Head of caudate nucleus (tissue), 42 donors: ENCODE measurements at regions of chr2 and their contacts with region 1.

Region 1: DNA sequence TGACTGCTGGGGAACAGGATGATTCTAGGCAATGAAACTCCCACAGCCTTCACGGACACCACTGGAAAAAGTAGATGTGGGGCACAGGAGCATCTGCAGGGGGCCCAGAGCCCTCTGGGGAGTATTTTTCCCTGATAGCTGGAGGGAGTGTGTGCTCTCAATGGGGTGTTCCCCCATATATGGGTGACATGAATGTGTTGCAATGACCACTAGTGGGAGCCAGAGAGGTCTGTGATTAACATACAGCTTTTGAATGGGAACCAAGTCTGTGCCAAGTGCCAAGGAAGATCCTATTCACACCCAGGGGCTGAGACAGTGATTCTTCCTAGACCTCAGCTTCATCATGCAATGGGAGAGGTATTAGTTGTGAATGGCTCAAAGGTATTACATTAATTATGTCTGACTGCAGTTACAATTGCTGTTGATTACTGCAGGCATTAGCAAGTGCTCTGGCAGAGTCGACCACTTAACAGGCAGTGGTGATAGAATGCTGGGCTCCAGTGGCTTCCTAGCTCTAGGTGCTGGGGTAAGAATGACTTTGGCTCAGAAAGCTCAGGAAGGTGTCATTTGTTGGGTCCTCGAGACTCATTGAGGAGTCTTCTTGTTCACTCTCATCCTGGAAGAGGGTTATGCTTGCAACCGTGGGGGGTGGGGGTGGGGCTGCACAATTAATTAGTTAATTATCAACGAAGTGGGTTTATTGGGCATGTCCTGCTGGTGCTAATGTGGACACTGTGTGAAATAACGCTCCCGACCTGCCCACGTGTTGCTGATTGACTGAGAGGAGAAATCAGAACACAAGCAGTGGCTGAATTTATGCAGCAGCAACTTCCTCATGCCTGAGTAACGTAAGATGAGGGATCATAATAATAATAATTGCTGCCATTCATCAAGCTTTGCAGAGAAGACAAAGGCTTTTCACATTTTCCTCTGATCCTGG is 194.1 kb downstream of the CLIP4 start:
- DNase-seq: peak in 35 of 42 donors; percentile 20 to 89 (median 60)

Region 2: DNA sequence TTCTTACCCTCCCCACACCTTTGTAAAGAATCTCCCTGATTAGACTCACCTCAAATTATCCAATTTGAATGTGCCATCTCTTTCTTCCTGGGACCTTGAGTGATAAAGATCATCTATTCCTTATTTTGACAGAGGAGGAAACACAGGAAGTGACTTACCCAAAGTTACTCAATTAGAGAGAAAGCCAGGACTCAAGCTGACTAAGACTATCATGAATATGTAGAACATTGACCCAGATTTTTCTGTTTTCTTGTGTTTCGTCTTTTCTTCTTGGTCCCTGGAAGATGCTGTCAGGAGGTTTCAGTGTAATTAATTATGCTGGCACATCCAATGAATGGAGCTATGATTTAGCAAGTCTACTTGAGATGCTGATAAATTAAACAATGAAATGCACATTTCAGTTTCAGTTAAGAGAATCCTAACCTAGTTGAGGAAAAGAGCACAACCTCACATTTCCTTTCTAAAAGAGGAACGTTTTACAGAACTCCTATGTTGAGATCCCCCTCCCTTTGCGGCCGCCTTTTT is 186.2 kb after region 1 on chr2:
- intact Hi-C with region 1: no loop called
- DNase-seq: no peak

Region 3: DNA sequence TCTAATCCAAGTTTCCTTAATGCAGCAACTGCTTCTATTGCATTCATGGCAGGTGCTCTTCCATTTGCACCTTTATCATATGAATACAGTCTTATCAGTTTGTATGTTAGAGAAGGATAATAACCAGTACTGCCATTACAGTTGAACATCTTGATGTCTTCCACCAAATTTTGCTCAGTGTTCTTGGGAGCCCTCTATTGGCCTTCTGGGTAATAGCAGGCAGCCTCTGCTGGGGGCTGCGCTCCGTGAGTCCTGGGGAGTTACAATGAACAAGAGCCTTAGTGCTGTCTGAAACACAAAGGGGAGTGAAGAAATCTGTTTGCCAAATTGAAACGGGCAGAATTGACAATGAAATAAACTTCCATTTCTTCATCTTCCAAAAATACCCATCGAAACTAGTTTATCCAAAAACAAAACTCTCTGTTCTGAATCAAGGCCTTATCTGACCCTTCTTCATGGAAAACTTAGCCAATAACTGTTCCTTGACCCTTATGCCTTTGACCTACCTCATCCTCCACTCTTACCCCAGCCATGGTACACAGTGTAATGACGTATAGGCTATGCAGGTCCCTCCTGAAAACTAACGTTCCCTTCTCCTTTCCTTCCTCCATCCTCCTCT is 532.1 kb after region 1 on chr2:
- intact Hi-C with region 1: loop called (anchors 10 kb)
- DNase-seq: peak in 33 of 42 donors; percentile 10 to 77 (median 41)